ENCODE measurements at regions of chr15 and their contacts with region 1.

Region 1: GRCh38 chr15:31840849-31841476 is 189.4 kb upstream of the CHRNA7 start:
- DNase-seq: peak in 1 of 2 donors; percentile 68
- ATAC-seq: peak; percentile 84 to 97 (median 94)
- H3K4me3 ChIP-seq: peak overlapping the region in 1 of 10 donors; percentile 18
- H3K27ac ChIP-seq: peak overlapping the region in 8 of 10 donors; percentile 27 to 77 (median 62)
- H3K4me1 ChIP-seq: peaks cover 0 to 11% (median 7%) of the 10 kb centered on the region in 9 donors
- H3K27me3 ChIP-seq: no peaks in the 10 kb centered on the region
- CTCF ChIP-seq: no peak

Region 2: DNA sequence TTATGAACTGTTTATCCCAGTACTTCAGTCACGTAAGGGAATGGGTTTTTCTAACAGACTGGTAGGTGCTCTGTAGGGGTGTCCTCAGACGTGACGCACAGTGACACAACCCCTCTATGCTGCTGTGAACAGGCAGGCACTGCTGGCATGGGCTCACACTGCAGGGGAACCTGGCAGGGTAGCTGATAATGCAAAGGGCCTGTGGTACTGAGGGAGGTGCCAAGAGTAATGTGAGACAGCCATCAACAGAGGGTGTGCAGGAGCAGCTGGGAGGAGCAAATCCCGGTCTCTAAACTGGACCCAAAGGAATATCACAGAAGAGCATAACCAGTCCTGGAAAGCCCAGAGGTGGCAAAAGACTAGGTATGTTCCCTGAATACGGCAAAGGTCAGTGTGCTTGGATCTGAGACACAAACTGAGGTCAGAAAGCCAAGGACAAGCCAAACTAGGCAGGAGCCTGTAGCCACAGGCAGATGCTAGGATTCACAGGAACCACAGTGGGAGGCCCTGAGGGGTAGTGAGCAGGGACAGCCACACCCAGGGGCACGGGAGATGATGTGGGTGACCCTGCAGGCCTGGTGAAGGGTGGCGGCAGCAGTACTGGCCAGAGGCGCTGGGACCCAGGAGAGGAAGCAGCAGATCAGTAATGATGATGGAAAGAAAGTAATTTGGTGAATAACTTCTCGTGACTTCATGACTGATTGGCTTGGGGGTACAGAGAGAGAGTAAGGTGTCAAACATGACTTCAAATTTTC is 58.8 kb before region 1 on chr15:
- intact Hi-C with region 1: loop called in 1 of 10 experiments (anchors 10 kb)
- DNase-seq: no peak
- ATAC-seq: no peak
- H3K4me3 ChIP-seq: no peak overlapping the region
- H3K27ac ChIP-seq: no peak overlapping the region
- H3K4me1 ChIP-seq: no peaks in the 10 kb centered on the region
- H3K27me3 ChIP-seq: no peaks in the 10 kb centered on the region
- CTCF ChIP-seq: no peak

Measured in heart right ventricle (tissue), 16 donors.